GM18951 (cell line): ENCODE measurements at regions of chr7 and their contacts with region 1.

Region 1: DNA sequence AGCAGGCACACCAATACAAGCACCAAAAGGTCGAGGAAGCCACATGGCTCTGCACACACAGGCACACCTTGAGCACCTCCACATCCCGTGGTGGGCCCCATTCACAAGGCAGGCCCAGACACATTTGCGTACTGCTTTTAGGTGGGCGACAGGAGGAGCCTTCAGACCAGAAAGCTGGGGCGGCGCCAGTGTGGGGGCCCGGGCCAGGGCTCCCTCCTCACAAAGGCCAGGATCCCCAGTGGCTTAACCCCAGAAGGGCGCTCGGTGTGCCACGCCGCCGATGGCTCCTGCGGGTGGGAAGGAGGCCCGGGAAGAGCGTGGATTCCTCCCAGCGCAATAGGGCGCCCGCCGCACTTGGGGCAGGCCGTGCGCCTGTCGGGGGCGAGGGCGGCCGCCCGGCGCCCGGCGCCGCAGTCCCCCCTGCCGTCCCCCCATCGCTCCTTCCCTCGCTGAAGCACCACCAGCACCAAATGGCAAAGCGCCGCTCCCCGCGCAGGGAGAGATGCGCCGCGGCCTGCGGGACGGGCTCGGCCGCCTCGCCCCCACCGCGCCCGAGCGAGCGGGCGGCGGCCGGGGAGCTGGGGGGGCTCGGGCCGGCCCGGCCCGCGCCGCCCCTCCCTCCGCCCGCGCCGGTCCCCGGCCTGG is 3.0 kb upstream of the SMARCD3 start:
- POLR2A ChIP-seq: no peak

Region 2: GRCh38 chr7:150648353-150649079 is 602.9 kb before region 1 on chr7:
- in situ Hi-C with region 1: no loop called
- POLR2A ChIP-seq: no peak

Region 3: GRCh38 chr7:151028131-151028947 is 223.1 kb before region 1 on chr7 and contains the start of gene ABCB8:
- in situ Hi-C with region 1: no loop called
- POLR2A ChIP-seq: peak; percentile 73

Region 4: GRCh38 chr7:151110941-151111645 is 140.4 kb before region 1 on chr7:
- in situ Hi-C with region 1: no loop called
- POLR2A ChIP-seq: no peak

Region 5: DNA sequence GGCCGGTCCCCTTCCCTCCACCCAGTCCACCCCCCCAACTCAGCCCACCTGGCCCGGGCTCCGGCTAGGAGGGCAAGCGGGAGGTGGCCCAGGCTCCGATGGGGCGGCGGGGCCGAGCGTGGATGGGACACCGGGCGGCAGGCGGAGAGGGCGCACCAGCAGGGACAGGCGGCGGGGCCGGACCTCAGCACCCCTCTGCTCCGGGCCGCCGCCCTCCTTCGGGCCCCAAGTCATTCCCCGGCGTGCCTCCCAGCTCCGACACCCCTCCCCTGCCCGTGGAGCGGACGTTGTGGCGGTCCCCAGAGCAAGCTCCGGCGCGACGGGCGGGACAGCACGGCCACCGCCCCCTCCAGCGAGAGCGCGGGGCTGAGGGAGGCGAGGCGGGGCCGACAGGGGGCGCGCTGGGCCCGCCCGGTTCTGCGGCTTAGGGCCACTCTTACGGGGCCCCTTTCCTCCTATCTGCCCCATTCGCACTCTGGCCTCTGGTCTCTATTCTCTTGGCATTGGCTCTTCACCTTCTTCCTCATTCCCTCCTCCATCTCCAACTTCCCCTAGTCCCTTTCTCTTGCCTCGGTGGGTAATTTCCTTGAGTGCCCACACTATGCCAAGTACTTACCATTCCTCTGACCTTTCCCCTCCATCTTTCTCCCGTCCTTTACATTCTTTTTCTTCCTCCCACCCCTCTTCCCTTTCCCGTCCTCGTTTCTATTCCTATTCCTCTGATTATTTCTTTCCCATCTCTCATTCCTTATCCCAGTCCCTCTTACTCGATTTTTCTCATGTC is 83.3 kb before region 1 on chr7:
- in situ Hi-C with region 1: loop called (anchors 10 kb)
- POLR2A ChIP-seq: no peak

Region 6: DNA sequence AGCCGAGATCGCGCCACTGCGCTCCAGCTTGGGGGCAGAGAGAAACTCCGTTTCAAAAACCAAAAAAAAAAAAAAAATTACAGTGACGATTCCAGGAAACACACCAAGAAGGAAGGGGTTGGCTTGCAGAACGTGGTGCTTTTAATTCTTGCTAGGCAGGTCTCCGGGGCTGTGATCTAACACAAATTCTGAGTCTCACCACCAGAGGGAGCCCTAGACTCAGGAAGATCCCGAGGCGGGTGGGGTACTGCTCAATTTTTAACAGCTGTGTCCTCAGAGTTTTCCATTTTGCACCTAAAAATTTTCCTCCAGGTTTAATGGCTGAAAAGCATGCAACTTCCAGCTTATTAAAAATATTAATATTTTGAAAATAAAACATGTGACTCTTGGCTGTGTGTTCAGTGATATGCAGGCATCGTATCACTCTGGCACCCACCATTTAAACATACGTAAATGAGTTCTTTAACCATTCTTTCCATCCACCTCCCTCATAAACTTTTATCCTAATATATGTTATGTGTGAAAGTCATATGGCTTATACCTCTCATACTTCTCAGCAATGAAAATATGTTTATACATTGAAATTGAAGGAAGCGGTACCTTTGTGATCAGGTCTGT is 63.7 kb after region 1 on chr7:
- in situ Hi-C with region 1: no loop called
- POLR2A ChIP-seq: no peak